ENCODE measurements at regions of chr9 and their contacts with region 1.

Region 1: DNA sequence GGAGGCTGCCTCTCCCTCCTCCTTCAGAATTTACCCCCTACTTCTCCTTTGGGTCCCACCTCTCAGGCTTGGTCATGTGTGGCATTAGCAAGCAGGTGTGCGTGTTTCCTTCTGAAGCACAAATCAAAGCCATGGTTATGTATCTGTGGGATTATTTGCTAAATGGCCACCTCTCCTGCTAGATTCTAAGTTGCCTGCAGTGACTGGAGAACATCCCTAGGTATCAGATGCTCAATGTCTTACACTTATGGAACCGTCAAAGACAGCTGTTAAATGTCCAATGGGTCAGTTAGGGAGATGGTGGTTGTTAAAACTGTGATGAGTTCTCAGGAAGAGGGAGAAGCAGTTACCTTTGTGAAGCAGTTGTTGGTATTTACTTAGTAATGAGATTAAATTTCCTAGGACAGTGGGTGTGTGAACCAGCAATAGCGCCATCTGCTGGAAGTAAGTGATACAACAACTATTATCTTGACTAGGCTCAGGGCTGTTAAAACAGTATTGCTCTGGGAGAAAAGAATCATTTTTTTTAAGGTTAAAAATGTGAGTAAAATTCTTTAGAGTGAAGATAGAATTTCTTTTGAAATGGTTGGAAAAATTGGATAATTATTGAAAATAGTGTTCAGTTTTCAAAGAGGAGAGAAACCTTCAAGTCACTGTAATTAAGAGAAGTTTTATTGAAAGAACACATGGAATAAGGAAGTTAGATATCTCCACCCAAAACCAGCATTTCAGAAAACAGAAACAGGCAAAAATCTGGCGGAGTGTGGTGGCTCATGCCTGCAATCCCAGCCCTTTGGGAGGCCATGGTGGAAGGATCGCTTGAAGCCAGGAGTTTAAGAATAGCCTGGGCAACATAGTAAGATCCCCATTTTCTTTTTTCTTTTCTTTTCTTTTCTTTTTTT is 71.3 kb downstream of the TMC1 start:
- DNase-seq: peak; percentile 46
- H3K4me3 ChIP-seq: no peak overlapping the region
- H3K27ac ChIP-seq: no peak overlapping the region
- H3K27me3 ChIP-seq: no peaks in the 10 kb centered on the region
- CTCF ChIP-seq: peak; percentile 69

Region 2: GRCh38 chr9:72160446-72161123 is 432.2 kb before region 1 on chr9:
- in situ Hi-C with region 1: no loop called
- DNase-seq: no peak
- H3K4me3 ChIP-seq: no peak overlapping the region
- H3K27ac ChIP-seq: no peak overlapping the region
- H3K27me3 ChIP-seq: no peaks in the 10 kb centered on the region
- CTCF ChIP-seq: no peak

Region 3: DNA sequence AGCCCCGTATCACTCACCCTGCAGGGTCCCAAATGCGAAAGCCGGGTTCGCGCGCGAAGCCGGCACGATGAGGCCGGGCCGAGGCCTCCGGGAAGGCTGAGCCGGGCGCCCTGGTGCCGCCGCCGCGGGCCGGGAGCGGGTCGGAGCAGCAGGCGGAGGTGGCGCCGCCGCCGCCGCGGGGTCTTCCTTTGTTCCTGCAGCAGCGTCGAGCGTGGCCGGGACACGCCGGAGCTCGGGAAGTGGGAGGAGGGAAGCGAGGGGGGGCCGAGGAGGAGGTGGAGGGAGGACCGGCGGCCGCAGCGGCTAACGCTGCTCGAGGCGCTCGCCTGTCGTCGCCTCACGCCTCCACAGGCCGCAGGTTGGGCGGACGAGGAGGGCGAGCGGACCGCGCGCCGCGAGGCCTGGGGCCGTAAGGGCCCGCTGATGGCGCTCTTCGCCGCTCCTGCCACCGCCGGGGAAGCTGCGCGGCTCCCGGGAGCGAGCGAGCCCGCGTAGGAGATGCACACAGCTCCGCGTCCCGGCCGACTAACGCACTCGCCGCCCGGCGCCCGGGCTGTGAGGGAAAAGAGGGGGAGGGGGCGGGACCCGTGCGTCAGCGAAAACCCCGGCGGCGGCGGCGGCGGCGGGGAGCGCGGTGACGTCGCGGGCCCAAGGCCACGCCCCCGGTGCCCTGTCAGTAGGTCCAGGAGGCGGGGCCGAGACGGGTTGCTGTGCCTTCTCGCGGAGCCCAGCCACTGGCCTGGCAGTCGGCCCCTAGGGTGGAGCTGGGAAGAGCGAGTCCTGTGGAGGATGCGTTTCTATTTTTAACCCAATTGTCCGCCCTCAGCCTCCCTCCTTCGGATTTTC is 227.9 kb before region 1 on chr9 and contains the start of gene ZFAND5:
- in situ Hi-C with region 1: loop called (anchors 25 kb)
- DNase-seq: peak; percentile 97
- H3K4me3 ChIP-seq: peak within 1 kb of the TSS; percentile 92
- H3K27ac ChIP-seq: peak within 1 kb of the TSS; percentile 99
- H3K27me3 ChIP-seq: no peaks in the 10 kb centered on the region
- CTCF ChIP-seq: no peak

Region 4: DNA sequence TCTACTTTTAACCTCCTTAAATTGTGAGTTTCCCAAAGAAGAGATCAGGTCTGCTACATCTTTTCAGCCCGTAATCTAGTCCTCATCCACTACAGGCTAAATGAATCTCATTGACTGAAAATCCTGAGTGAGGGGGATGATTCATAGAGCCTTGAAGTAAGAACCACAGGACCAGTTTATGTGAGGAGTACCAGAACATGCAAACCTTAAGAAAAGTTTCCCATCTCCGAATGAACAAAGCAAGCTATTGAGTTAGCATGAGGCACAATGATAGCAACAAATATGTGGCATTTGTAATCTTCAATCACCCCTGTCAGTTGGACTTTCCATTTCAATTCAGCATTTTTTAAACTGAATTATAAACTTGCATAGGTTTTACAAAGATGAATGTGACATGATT is 163.1 kb after region 1 on chr9:
- in situ Hi-C with region 1: no loop called
- DNase-seq: no peak
- H3K4me3 ChIP-seq: no peak overlapping the region
- H3K27ac ChIP-seq: no peak overlapping the region
- H3K27me3 ChIP-seq: no peaks in the 10 kb centered on the region
- CTCF ChIP-seq: no peak

Measured in brain microvascular endothelial cell (primary cell).